ENCODE measurements at regions of chr1 and their contacts with region 1.

Region 1: GRCh38 chr1:178774263-178774662 is 49.2 kb downstream of the RALGPS2 start:
- DNase-seq: no peak
- ATAC-seq: no peak
- H3K4me3 Mint-ChIP-seq: no peak overlapping the region
- H3K27ac Mint-ChIP-seq: no peak overlapping the region
- H3K4me1 Mint-ChIP-seq: no peaks in the 10 kb centered on the region
- H3K27me3 Mint-ChIP-seq: no peaks in the 10 kb centered on the region

Region 2: GRCh38 chr1:179278920-179279319 is 504.7 kb after region 1 on chr1:
- CTCF ChIA-PET with region 1: no interaction called
- POLR2A ChIA-PET with region 1: no interaction called
- intact Hi-C with region 1: no loop called
- DNase-seq: no peak
- ATAC-seq: no peak
- H3K4me3 Mint-ChIP-seq: no peak overlapping the region
- H3K27ac Mint-ChIP-seq: no peak overlapping the region
- H3K4me1 Mint-ChIP-seq: no peaks in the 10 kb centered on the region
- H3K27me3 Mint-ChIP-seq: no peaks in the 10 kb centered on the region

Region 3: GRCh38 chr1:179353546-179353945 is 579.3 kb after region 1 on chr1:
- CTCF ChIA-PET with region 1: no interaction called
- POLR2A ChIA-PET with region 1: no interaction called
- intact Hi-C with region 1: loop called in 1 of 2 experiments (anchors 10 kb)
- DNase-seq: no peak
- ATAC-seq: no peak
- H3K4me3 Mint-ChIP-seq: no peak overlapping the region
- H3K27ac Mint-ChIP-seq: no peak overlapping the region
- H3K4me1 Mint-ChIP-seq: peaks cover 12% of the 10 kb centered on the region
- H3K27me3 Mint-ChIP-seq: no peaks in the 10 kb centered on the region

Region 4: GRCh38 chr1:179376223-179376622 is 602.0 kb after region 1 on chr1:
- CTCF ChIA-PET with region 1: no interaction called
- POLR2A ChIA-PET with region 1: no interaction called
- intact Hi-C with region 1: no loop called
- DNase-seq: no peak
- ATAC-seq: no peak
- H3K4me3 Mint-ChIP-seq: no peak overlapping the region
- H3K27ac Mint-ChIP-seq: no peak overlapping the region
- H3K4me1 Mint-ChIP-seq: no peaks in the 10 kb centered on the region
- H3K27me3 Mint-ChIP-seq: no peaks in the 10 kb centered on the region

Measured in activated CD4-positive, alpha-beta T cell treated with anti-CD3 and anti-CD28 coated beads for 36 hours (primary cell).